ENCODE measurements at regions of chr10 and their contacts with region 1.

Region 1: DNA sequence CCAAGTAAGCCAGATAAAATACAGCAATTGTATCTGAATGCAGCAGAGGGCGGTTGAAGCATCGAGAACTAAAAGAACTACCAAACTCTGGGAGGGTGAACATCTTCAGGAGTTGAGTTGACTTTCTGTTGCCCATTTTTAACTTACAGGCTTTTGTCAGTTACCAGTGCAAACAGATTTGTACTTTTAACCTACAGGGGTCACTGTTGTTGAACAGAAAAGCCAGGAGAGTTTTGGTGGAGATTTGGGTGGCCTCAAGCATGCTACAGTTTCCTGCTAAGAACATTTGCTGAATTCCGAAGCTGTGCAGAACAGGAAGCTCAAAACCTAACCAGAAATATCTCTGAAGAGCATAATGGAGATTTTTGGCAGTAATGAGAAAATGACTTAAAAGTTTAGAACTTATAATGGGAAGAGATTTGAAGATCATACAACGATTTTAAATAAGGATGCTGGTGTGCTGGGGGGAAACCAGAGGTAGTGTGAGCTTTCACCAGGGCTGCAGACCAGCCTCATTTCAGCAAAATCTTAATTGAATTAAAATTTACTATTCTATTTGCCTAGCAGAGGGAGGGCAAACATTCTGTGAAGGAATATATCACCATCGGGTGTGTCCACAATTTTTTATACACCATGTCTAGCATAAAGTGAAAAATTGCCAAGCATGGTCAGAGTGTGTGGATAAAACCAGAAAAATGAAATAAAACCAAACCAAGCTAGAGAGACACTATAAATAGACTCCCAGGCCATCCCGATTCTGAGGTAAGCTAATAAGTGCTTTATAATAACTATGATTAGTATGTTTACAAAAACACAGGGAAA is 208.6 kb upstream of the CCDC6 start:
- DNase-seq: no peak
- ATAC-seq: peak; percentile 68 to 91 (median 80)
- H3K4me3 ChIP-seq: no peak overlapping the region
- H3K27ac ChIP-seq: no peak overlapping the region
- H3K4me1 ChIP-seq: peaks cover 10% of the 10 kb centered on the region
- H3K27me3 ChIP-seq: no peaks in the 10 kb centered on the region
- CTCF ChIP-seq: peak; percentile 61

Region 2: GRCh38 chr10:60021324-60021723 is 93.7 kb before region 1 on chr10:
- intact Hi-C with region 1: no loop called
- DNase-seq: no peak
- ATAC-seq: no peak
- H3K4me3 ChIP-seq: no peak overlapping the region
- H3K27ac ChIP-seq: no peak overlapping the region
- H3K4me1 ChIP-seq: no peaks in the 10 kb centered on the region
- H3K27me3 ChIP-seq: no peaks in the 10 kb centered on the region
- CTCF ChIP-seq: no peak

Region 3: GRCh38 chr10:60155943-60156683 is 41.1 kb after region 1 on chr10:
- intact Hi-C with region 1: loop called in 1 of 2 experiments (anchors 5 kb)
- DNase-seq: no peak
- ATAC-seq: peak in 3 of 4 donors; percentile 61 to 76 (median 62)
- H3K4me3 ChIP-seq: no peak overlapping the region
- H3K27ac ChIP-seq: no peak overlapping the region
- H3K4me1 ChIP-seq: no peaks in the 10 kb centered on the region
- H3K27me3 ChIP-seq: no peaks in the 10 kb centered on the region
- CTCF ChIP-seq: no peak

Region 4: GRCh38 chr10:60208676-60209269 is 93.8 kb after region 1 on chr10:
- intact Hi-C with region 1: loop called in 1 of 2 experiments (anchors 2 kb)
- DNase-seq: no peak
- ATAC-seq: peak; percentile 57 to 88 (median 71)
- H3K4me3 ChIP-seq: no peak overlapping the region
- H3K27ac ChIP-seq: no peak overlapping the region
- H3K4me1 ChIP-seq: no peaks in the 10 kb centered on the region
- H3K27me3 ChIP-seq: no peaks in the 10 kb centered on the region
- CTCF ChIP-seq: peak; percentile 78

Measured in psoas muscle (tissue), 8 donors.